ENCODE measurements at regions of chr12 and their contacts with region 1.

Region 1: DNA sequence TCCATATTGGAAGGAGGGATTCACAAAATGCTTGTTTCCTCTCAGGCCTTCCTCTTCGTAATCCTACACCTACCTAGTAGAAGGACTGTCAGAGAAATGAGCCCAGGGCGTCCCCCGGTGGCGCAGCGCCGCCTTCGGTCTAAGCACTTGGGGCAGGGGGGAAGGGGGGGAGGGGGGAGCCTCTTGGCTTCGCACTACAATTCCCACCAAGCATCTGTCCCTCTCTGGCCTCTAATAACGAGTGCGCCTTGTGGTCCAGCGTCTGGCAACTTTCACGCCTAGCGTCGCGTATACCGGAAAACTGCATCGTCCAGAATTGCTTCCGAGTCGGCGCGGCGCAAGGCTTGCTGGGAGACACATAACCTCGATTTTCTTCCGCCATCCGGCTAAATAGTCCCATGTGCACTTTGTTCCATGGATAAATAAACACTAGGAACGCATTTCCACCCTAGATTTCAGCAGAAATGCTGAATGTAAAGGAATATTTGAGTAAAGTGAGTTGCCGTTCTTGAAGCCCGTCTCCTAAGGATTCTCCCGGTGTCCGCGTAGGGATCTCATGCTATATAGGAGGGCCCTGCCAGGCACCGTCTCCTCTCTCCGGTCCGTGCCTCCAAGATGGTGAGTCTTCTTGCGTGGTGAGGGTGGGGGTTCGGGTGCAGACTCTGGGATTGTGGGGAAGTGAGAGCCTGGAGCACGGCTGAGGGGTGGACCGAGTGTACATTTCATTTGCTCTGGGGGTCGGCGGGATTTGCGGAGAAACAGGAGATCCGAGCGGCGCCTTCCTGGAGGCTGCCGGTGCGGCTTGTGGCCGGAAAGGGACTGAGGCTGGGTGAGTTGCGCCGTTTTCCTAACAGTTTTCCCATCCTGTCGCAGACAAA is at the start of gene RPS26:
- DNase-seq: peak; percentile 89
- H3K4me3 ChIP-seq: peak within 1 kb of the TSS; percentile 81 to 93
- H3K27ac ChIP-seq: peak within 1 kb of the TSS; percentile 90 to 98
- H3K4me1 ChIP-seq: peaks cover 6 to 10% of the 10 kb centered on the region in 2 experiments
- H3K27me3 ChIP-seq: no peaks in the 10 kb centered on the region
- CTCF ChIP-seq: peak; percentile 50
- EP300 ChIP-seq: no peak
- RAD21 ChIP-seq: peak; percentile 71
- polyA plus RNA-seq, gene RPS26: 1,500 and 1,782 TPM in 2 replicates

Region 2: GRCh38 chr12:56029666-56030293 is 12.0 kb before region 1 on chr12:
- CTCF ChIA-PET with region 1: interaction called, 21 read pairs
- POLR2A ChIA-PET with region 1: no interaction called
- DNase-seq: peak; percentile 76
- H3K4me3 ChIP-seq: no peak overlapping the region
- H3K27ac ChIP-seq: peak overlapping the region in 1 of 2 experiments; percentile 54; a peak in 1 of 4 replicates
- H3K4me1 ChIP-seq: 0 out of 4 replicates have a peak, but pooled peaks cover 0 to 8% of the 10 kb centered on the region in 2 experiments
- H3K27me3 ChIP-seq: no peaks in the 10 kb centered on the region
- CTCF ChIP-seq: peak; percentile 86
- EP300 ChIP-seq: no peak
- RAD21 ChIP-seq: peak; percentile 75

Region 3: GRCh38 chr12:56062996-56063395 is 21.2 kb after region 1 on chr12:
- CTCF ChIA-PET with region 1: interaction called, 14 read pairs
- POLR2A ChIA-PET with region 1: no interaction called
- DNase-seq: no peak
- H3K4me3 ChIP-seq: no peak overlapping the region; a peak in 1 of 4 replicates
- H3K27ac ChIP-seq: peak overlapping the region in 1 of 2 experiments; percentile 3; a peak in 1 of 4 replicates
- H3K4me1 ChIP-seq: 0 out of 4 replicates have a peak, but pooled peaks cover 0 to 4% of the 10 kb centered on the region in 2 experiments
- H3K27me3 ChIP-seq: no peaks in the 10 kb centered on the region
- CTCF ChIP-seq: no peak
- EP300 ChIP-seq: no peak
- RAD21 ChIP-seq: no peak

Region 4: GRCh38 chr12:56078990-56079664 is 37.3 kb after region 1 on chr12:
- CTCF ChIA-PET with region 1: interaction called, 11 read pairs
- POLR2A ChIA-PET with region 1: interaction called, 3 read pairs
- DNase-seq: peak; percentile 94
- H3K4me3 ChIP-seq: peak overlapping the region; percentile 53 to 71
- H3K27ac ChIP-seq: peak overlapping the region; percentile 36 to 55
- H3K4me1 ChIP-seq: peaks cover 0 to 6% of the 10 kb centered on the region in 2 experiments; a peak in 1 of 4 replicates
- H3K27me3 ChIP-seq: no peaks in the 10 kb centered on the region
- CTCF ChIP-seq: peak; percentile 69
- EP300 ChIP-seq: no peak
- RAD21 ChIP-seq: peak; percentile 52

Measured in SK-N-SH (cell line).